ENCODE measurements at regions of chr13 and their contacts with region 1.

Region 1: DNA sequence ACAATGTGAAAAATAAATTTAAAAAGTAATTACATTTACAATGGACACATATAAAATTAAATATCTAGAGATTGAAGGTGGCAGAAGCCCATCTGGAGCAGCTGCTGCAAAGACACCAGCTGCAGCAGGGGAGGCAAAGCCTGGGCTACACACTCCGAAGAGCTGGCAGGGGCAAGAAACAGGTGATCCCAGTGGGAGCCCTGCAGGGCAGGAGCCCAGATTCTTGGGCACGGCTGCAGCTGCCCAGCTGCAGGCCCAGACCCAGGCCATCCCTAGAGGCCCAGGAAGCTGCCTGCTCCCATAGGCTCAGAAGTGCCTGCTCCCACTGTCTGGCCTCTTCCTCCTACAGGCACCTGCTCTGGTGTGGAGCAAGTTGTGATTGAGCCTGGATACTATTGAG is 1547.9 kb upstream of the SPRY2 start:
- DNase-seq: no peak
- ATAC-seq: no peak
- H3K4me3 ChIP-seq: no peak overlapping the region
- H3K4me3 Mint-ChIP-seq: no peak overlapping the region
- H3K27ac ChIP-seq: no peak overlapping the region
- H3K27ac Mint-ChIP-seq: no peak overlapping the region
- H3K4me1 ChIP-seq: no peaks in the 10 kb centered on the region
- H3K4me1 Mint-ChIP-seq: no peaks in the 10 kb centered on the region
- H3K27me3 ChIP-seq: no peaks in the 10 kb centered on the region
- H3K27me3 Mint-ChIP-seq: no peaks in the 10 kb centered on the region
- CTCF ChIP-seq: no peak

Region 2: GRCh38 chr13:81425286-81425685 is 463.6 kb before region 1 on chr13:
- CTCF ChIA-PET with region 1: no interaction called
- POLR2A ChIA-PET with region 1: no interaction called
- intact Hi-C with region 1: no loop called
- DNase-seq: no peak
- ATAC-seq: no peak
- H3K4me3 ChIP-seq: no peak overlapping the region
- H3K4me3 Mint-ChIP-seq: no peak overlapping the region
- H3K27ac ChIP-seq: no peak overlapping the region
- H3K27ac Mint-ChIP-seq: no peak overlapping the region
- H3K4me1 ChIP-seq: no peaks in the 10 kb centered on the region
- H3K4me1 Mint-ChIP-seq: no peaks in the 10 kb centered on the region
- H3K27me3 ChIP-seq: no peaks in the 10 kb centered on the region
- H3K27me3 Mint-ChIP-seq: no peaks in the 10 kb centered on the region
- CTCF ChIP-seq: no peak

Region 3: DNA sequence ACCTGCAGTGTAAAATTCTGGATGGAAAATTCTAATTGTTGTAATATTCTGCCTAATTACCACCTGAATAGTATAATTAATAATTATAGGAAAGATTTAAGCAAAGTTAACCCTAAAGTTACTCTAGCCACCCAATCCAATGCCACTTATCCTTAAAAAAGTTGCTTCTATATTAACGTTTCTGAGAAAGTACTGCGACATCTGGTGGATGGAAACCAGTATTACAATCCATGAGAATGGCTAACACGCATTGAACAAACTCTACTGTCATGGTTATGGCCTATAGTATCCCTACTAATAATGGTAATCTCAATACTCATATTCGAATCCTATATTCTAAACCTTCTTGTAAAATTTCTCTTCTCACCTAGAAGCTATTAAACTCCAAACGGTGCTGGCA is 441.6 kb after region 1 on chr13:
- CTCF ChIA-PET with region 1: no interaction called
- POLR2A ChIA-PET with region 1: no interaction called
- intact Hi-C with region 1: loop called (anchors 5 kb)
- DNase-seq: no peak
- ATAC-seq: no peak
- H3K4me3 ChIP-seq: no peak overlapping the region
- H3K4me3 Mint-ChIP-seq: no peak overlapping the region
- H3K27ac ChIP-seq: no peak overlapping the region
- H3K27ac Mint-ChIP-seq: no peak overlapping the region
- H3K4me1 ChIP-seq: no peaks in the 10 kb centered on the region
- H3K4me1 Mint-ChIP-seq: no peaks in the 10 kb centered on the region
- H3K27me3 ChIP-seq: no peaks in the 10 kb centered on the region
- H3K27me3 Mint-ChIP-seq: no peaks in the 10 kb centered on the region
- CTCF ChIP-seq: peak; percentile 40